ENCODE measurements at regions of chr15 and their contacts with region 1.

Region 1: DNA sequence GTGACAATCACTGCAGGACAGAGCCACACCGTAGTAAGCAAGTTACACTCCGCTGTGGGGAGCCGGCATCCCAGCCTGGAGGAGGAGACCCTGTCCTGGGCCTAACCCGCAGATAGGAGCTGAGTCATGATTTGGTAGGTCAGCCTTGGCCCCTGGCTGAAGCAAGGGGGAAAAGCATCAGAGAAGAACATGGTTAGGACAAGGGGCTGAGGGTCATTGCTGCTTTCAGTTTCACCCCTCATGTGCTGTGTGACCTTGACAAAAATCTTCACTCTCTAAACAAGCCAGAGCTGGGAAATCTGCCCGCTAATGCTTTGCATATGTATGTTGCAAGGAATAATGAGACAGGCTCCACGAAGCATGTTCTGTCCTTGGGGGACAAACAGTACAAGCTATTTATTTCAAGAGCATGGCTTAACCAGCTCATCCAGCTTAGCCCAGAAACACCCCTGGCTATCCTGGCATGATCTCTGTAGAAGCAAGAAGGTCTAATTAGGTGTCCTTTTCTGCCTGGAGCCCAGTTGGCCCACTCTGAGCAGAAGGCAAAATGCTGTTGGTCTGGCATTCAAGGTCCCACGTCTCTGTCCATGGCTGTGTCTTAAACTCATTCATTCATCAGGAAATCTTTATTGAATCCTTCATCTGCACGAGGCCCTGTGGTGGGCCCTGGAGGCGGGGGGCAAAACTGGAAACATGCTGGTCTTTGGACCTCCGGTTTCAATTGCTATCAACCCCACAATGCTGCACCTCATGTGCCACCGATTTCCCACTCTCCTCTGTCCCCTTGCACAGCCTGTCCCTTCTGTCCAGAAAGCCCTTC is 221.3 kb upstream of the LYSMD4 start:
- DNase-seq: peak in 1 of 5 donors; percentile 7
- ATAC-seq: no peak
- H3K4me3 ChIP-seq: no peak overlapping the region
- H3K27ac ChIP-seq: no peak overlapping the region
- H3K4me1 ChIP-seq: no peaks in the 10 kb centered on the region
- H3K27me3 ChIP-seq: peaks cover 0 to 1% (median 0%) of the 10 kb centered on the region in 9 donors
- CTCF ChIP-seq: no peak
- POLR2A ChIP-seq: no peak

Region 2: GRCh38 chr15:99895189-99895955 is 59.2 kb before region 1 on chr15:
- intact Hi-C with region 1: no loop called
- DNase-seq: no peak
- ATAC-seq: no peak
- H3K4me3 ChIP-seq: no peak overlapping the region
- H3K27ac ChIP-seq: no peak overlapping the region
- H3K4me1 ChIP-seq: no peaks in the 10 kb centered on the region
- H3K27me3 ChIP-seq: no peaks in the 10 kb centered on the region
- CTCF ChIP-seq: no peak
- POLR2A ChIP-seq: no peak

Region 3: GRCh38 chr15:100020189-100020588 is 65.6 kb after region 1 on chr15:
- intact Hi-C with region 1: no loop called
- DNase-seq: no peak
- ATAC-seq: peak in 3 of 4 donors; percentile 17 to 49 (median 44)
- H3K4me3 ChIP-seq: no peak overlapping the region
- H3K27ac ChIP-seq: peak overlapping the region in 1 of 12 donors; percentile 56
- H3K4me1 ChIP-seq: peaks cover 0 to 21% (median 0%) of the 10 kb centered on the region in 12 donors
- H3K27me3 ChIP-seq: no peaks in the 10 kb centered on the region
- CTCF ChIP-seq: no peak
- POLR2A ChIP-seq: no peak

Region 4: GRCh38 chr15:100030586-100031229 is 76.1 kb after region 1 on chr15:
- intact Hi-C with region 1: no loop called
- DNase-seq: no peak
- ATAC-seq: no peak
- H3K4me3 ChIP-seq: no peak overlapping the region
- H3K27ac ChIP-seq: no peak overlapping the region
- H3K4me1 ChIP-seq: peaks cover 0 to 36% (median 2%) of the 10 kb centered on the region in 12 donors
- H3K27me3 ChIP-seq: no peaks in the 10 kb centered on the region
- CTCF ChIP-seq: no peak
- POLR2A ChIP-seq: no peak

Region 5: GRCh38 chr15:100093211-100094126 is 138.9 kb after region 1 on chr15:
- intact Hi-C with region 1: no loop called
- DNase-seq: no peak
- ATAC-seq: peak in 2 of 4 donors; percentile 20 to 56
- H3K4me3 ChIP-seq: no peak overlapping the region
- H3K27ac ChIP-seq: no peak overlapping the region
- H3K4me1 ChIP-seq: no peaks in the 10 kb centered on the region
- H3K27me3 ChIP-seq: no peaks in the 10 kb centered on the region
- CTCF ChIP-seq: no peak
- POLR2A ChIP-seq: no peak

Region 6: GRCh38 chr15:100131321-100132224 is 177.0 kb after region 1 on chr15:
- intact Hi-C with region 1: loop called in 2 of 10 experiments (anchors 10 kb)
- DNase-seq: peak; percentile 71 to 81 (median 77)
- ATAC-seq: peak in 3 of 4 donors; percentile 91 to 94 (median 92)
- H3K4me3 ChIP-seq: peak overlapping the region in 9 of 12 donors; percentile 20 to 52 (median 39)
- H3K27ac ChIP-seq: peak overlapping the region in 8 of 12 donors; percentile 3 to 64 (median 44)
- H3K4me1 ChIP-seq: peaks cover 0 to 13% (median 0%) of the 10 kb centered on the region in 12 donors
- H3K27me3 ChIP-seq: no peaks in the 10 kb centered on the region
- CTCF ChIP-seq: peak; percentile 39 to 80 (median 57)
- POLR2A ChIP-seq: no peak

Measured in heart left ventricle (tissue), 16 donors.